ENCODE measurements at regions of chr18 and their contacts with region 1.

Region 1: DNA sequence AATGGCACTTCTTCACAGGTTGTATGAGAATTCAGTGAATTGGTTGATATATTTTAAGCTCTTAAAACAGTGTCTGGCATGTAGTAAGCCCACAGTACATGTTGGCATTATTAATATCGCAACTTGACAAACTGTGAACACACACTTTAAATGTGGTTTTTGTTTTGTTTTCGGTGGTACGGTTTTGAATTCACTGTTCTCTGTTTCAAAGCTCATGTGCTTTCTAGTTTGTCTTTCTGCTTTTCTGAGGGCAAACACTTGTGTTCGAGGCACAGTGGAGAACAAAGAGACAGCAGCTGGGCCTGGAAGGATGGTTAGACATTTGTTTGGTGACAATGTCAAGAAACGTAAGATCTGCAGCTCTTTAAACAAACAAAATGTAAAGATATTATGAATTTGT is 276.5 kb upstream of the MC4R start:
- DNase-seq: no peak
- H3K4me3 ChIP-seq: no peak overlapping the region
- H3K27ac ChIP-seq: no peak overlapping the region
- H3K4me1 ChIP-seq: no peaks in the 10 kb centered on the region
- H3K27me3 ChIP-seq: no peaks in the 10 kb centered on the region
- CTCF ChIP-seq: no peak
- EP300 ChIP-seq: no peak
- POLR2A ChIP-seq: no peak

Region 2: GRCh38 chr18:59437851-59438569 is 1211.1 kb before region 1 on chr18:
- in situ Hi-C with region 1: no loop called
- intact Hi-C with region 1: loop called (anchors 5 kb)
- DNase-seq: no peak
- H3K4me3 ChIP-seq: no peak overlapping the region
- H3K27ac ChIP-seq: no peak overlapping the region
- H3K4me1 ChIP-seq: no peaks in the 10 kb centered on the region
- H3K27me3 ChIP-seq: no peaks in the 10 kb centered on the region
- CTCF ChIP-seq: no peak
- EP300 ChIP-seq: no peak
- POLR2A ChIP-seq: no peak

Region 3: GRCh38 chr18:60350941-60351340 is 298.2 kb before region 1 on chr18:
- in situ Hi-C with region 1: no loop called
- intact Hi-C with region 1: no loop called
- DNase-seq: no peak
- H3K4me3 ChIP-seq: no peak overlapping the region
- H3K27ac ChIP-seq: no peak overlapping the region
- H3K4me1 ChIP-seq: no peaks in the 10 kb centered on the region
- H3K27me3 ChIP-seq: no peaks in the 10 kb centered on the region
- CTCF ChIP-seq: no peak
- EP300 ChIP-seq: no peak
- POLR2A ChIP-seq: no peak

Region 4: GRCh38 chr18:60452421-60452820 is 196.7 kb before region 1 on chr18:
- in situ Hi-C with region 1: no loop called
- intact Hi-C with region 1: no loop called
- DNase-seq: no peak
- H3K4me3 ChIP-seq: no peak overlapping the region
- H3K27ac ChIP-seq: no peak overlapping the region
- H3K4me1 ChIP-seq: no peaks in the 10 kb centered on the region
- H3K27me3 ChIP-seq: no peaks in the 10 kb centered on the region
- CTCF ChIP-seq: no peak
- EP300 ChIP-seq: no peak
- POLR2A ChIP-seq: no peak

Region 5: DNA sequence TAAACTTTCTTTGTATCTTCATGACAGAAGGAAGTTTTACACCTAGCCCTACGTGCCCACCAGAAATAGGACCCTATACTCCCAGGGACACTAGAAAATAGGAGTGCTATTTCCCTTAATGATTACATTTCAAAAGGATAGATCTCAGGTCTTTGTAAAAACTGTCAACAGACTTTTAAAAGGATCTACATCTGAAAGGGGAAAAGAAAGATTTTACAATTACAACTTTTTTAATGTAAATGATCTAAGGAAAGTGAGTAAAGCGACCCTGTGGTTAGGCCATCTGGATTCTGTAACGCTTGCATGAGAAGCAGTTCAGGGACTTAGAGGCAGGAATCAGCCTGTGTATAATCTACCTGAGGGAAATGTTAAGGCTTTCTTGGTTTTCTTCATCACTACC is 155.3 kb after region 1 on chr18:
- in situ Hi-C with region 1: no loop called
- intact Hi-C with region 1: no loop called
- DNase-seq: no peak
- H3K4me3 ChIP-seq: no peak overlapping the region
- H3K27ac ChIP-seq: no peak overlapping the region
- H3K4me1 ChIP-seq: no peaks in the 10 kb centered on the region
- H3K27me3 ChIP-seq: no peaks in the 10 kb centered on the region
- CTCF ChIP-seq: no peak
- EP300 ChIP-seq: no peak
- POLR2A ChIP-seq: no peak

Measured in transverse colon (tissue), 4 donors.